CD8-positive, alpha-beta T cell (primary cell): ENCODE measurements at regions of chr1 and their contacts with region 1.

Region 1: DNA sequence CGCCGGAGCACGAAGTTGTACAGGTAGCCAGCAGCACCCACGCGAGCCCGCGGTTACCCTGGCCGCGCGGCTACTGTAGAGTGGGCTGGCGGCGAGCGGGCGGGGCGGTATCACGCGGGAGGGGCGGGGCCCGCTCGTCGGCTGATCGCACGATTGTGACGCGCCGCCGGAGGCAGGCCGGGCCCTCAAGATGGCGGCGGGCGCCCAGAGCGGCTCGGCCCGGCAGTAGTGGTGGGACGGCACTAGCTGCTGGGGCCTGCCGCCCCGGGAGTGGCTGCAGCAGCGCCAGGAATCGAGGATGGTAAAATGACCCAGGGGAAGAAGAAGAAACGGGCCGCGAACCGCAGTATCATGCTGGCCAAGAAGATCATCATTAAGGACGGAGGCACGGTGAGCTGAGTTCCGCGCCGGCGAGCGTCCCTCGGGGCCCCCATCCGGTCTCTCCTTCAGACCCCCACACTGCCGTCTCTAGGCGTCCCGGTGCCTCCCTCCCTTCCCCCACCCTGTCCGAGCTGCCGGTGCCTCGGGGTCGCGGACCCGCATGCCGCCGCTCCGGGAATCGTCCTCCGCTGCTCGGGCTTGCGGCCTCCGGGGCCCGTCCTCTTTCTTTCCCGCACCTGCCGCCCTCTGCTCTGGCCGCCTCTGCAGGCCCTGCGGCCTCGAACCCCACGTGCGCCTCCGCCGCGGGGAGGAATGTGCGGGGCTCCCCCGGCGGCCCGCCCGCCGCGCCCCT is 68.3 kb downstream of the SLC35A3 start:
- DNase-seq: peak; percentile 77 to 95 (median 87)
- ATAC-seq: peak; percentile 78
- H3K4me3 ChIP-seq: peak overlapping the region; percentile 85 to 94
- H3K4me3 Mint-ChIP-seq: peak overlapping the region; percentile 97
- H3K27ac ChIP-seq: peak overlapping the region; percentile 94 to 99
- H3K27ac Mint-ChIP-seq: peak overlapping the region; percentile 98
- H3K4me1 ChIP-seq: peaks cover 43% of the 10 kb centered on the region
- H3K4me1 Mint-ChIP-seq: peaks cover 52% of the 10 kb centered on the region
- H3K27me3 ChIP-seq: no peaks in the 10 kb centered on the region
- H3K27me3 Mint-ChIP-seq: no peaks in the 10 kb centered on the region
- CTCF ChIP-seq: no peak

Region 2: GRCh38 chr1:99808391-99809115 is 229.5 kb before region 1 on chr1:
- CTCF ChIA-PET with region 1: no interaction called
- POLR2A ChIA-PET with region 1: interaction called, 3 read pairs
- intact Hi-C with region 1: loop called (anchors 1 kb)
- DNase-seq: peak in 4 of 9 experiments; percentile 15 to 81 (median 54)
- ATAC-seq: peak; percentile 79
- H3K4me3 ChIP-seq: no peak overlapping the region
- H3K4me3 Mint-ChIP-seq: no peak overlapping the region
- H3K27ac ChIP-seq: no peak overlapping the region
- H3K27ac Mint-ChIP-seq: no peak overlapping the region
- H3K4me1 ChIP-seq: no peaks in the 10 kb centered on the region
- H3K4me1 Mint-ChIP-seq: peaks cover 4% of the 10 kb centered on the region
- H3K27me3 ChIP-seq: peaks cover 0 to 2% of the 10 kb centered on the region in 2 experiments
- H3K27me3 Mint-ChIP-seq: peaks cover 3% of the 10 kb centered on the region
- CTCF ChIP-seq: peak; percentile 85

Region 3: DNA sequence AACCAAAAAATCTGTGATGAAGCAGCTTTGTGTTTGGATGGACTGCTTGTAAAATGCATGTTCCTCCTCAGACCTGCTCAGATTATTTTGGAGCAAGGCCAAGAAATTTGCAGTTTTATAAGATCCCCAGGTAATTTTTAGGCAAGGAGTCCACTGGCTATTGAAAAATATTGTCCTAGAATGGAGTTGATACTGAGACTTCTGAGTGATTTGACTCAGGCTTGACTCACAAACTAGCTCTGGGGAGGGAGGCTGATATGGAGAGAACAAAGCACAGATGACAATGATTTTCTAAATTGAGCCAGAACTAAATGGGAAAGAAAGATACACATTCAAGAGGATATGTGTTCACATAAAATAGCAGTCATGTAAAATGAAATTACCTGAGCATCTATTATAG is 151.3 kb before region 1 on chr1:
- CTCF ChIA-PET with region 1: no interaction called
- POLR2A ChIA-PET with region 1: no interaction called
- intact Hi-C with region 1: loop called in 1 of 2 experiments (anchors 5 kb)
- DNase-seq: no peak
- ATAC-seq: no peak
- H3K4me3 ChIP-seq: no peak overlapping the region
- H3K4me3 Mint-ChIP-seq: no peak overlapping the region
- H3K27ac ChIP-seq: no peak overlapping the region
- H3K27ac Mint-ChIP-seq: no peak overlapping the region
- H3K4me1 ChIP-seq: no peaks in the 10 kb centered on the region
- H3K4me1 Mint-ChIP-seq: no peaks in the 10 kb centered on the region
- H3K27me3 ChIP-seq: no peaks in the 10 kb centered on the region
- H3K27me3 Mint-ChIP-seq: no peaks in the 10 kb centered on the region
- CTCF ChIP-seq: no peak

Region 4: GRCh38 chr1:99986656-99987225 is 51.4 kb before region 1 on chr1:
- CTCF ChIA-PET with region 1: no interaction called
- POLR2A ChIA-PET with region 1: no interaction called
- intact Hi-C with region 1: no loop called
- DNase-seq: no peak
- ATAC-seq: no peak
- H3K4me3 ChIP-seq: no peak overlapping the region
- H3K4me3 Mint-ChIP-seq: no peak overlapping the region
- H3K27ac ChIP-seq: no peak overlapping the region
- H3K27ac Mint-ChIP-seq: no peak overlapping the region
- H3K4me1 ChIP-seq: no peaks in the 10 kb centered on the region
- H3K4me1 Mint-ChIP-seq: peaks cover 19% of the 10 kb centered on the region
- H3K27me3 ChIP-seq: no peaks in the 10 kb centered on the region
- H3K27me3 Mint-ChIP-seq: no peaks in the 10 kb centered on the region
- CTCF ChIP-seq: no peak

Region 5: GRCh38 chr1:100051893-100052292 is 13.8 kb after region 1 on chr1:
- CTCF ChIA-PET with region 1: interaction called, 3 read pairs
- POLR2A ChIA-PET with region 1: interaction called, 5 read pairs
- intact Hi-C with region 1: loop called in 1 of 2 experiments (anchors 2 kb)
- DNase-seq: no peak
- ATAC-seq: no peak
- H3K4me3 ChIP-seq: no peak overlapping the region
- H3K4me3 Mint-ChIP-seq: no peak overlapping the region
- H3K27ac ChIP-seq: no peak overlapping the region
- H3K27ac Mint-ChIP-seq: no peak overlapping the region
- H3K4me1 ChIP-seq: peaks cover 28% of the 10 kb centered on the region
- H3K4me1 Mint-ChIP-seq: peaks cover 55% of the 10 kb centered on the region
- H3K27me3 ChIP-seq: no peaks in the 10 kb centered on the region
- H3K27me3 Mint-ChIP-seq: no peaks in the 10 kb centered on the region
- CTCF ChIP-seq: no peak

Region 6: GRCh38 chr1:100249537-100250257 is 211.6 kb after region 1 on chr1 and contains the start of gene DBT:
- CTCF ChIA-PET with region 1: no interaction called
- POLR2A ChIA-PET with region 1: no interaction called
- intact Hi-C with region 1: loop called (anchors 1 to 5 kb)
- DNase-seq: peak; percentile 77 to 96 (median 92)
- ATAC-seq: peak; percentile 100
- H3K4me3 ChIP-seq: peak within 1 kb of the TSS; percentile 68 to 92
- H3K4me3 Mint-ChIP-seq: no peak within 1 kb of the TSS
- H3K27ac ChIP-seq: peak within 1 kb of the TSS; percentile 71 to 87
- H3K27ac Mint-ChIP-seq: no peak within 1 kb of the TSS
- H3K4me1 ChIP-seq: peaks cover 20% of the 10 kb centered on the region
- H3K4me1 Mint-ChIP-seq: peaks cover 18% of the 10 kb centered on the region
- H3K27me3 ChIP-seq: no peaks in the 10 kb centered on the region
- H3K27me3 Mint-ChIP-seq: no peaks in the 10 kb centered on the region
- CTCF ChIP-seq: no peak
- total RNA-seq, gene DBT: 4.6 to 4.9 TPM

Region 7: GRCh38 chr1:100358210-100358609 is 320.1 kb after region 1 on chr1:
- CTCF ChIA-PET with region 1: no interaction called
- POLR2A ChIA-PET with region 1: interaction called, 3 read pairs
- intact Hi-C with region 1: loop called in 1 of 2 experiments (anchors 2 kb)
- DNase-seq: peak in 2 of 9 experiments; percentile 47 to 61
- ATAC-seq: peak; percentile 40
- H3K4me3 ChIP-seq: no peak overlapping the region
- H3K4me3 Mint-ChIP-seq: peak overlapping the region; percentile 47
- H3K27ac ChIP-seq: no peak overlapping the region
- H3K27ac Mint-ChIP-seq: peak overlapping the region; percentile 52
- H3K4me1 ChIP-seq: peaks cover 73% of the 10 kb centered on the region
- H3K4me1 Mint-ChIP-seq: peaks cover 90% of the 10 kb centered on the region
- H3K27me3 ChIP-seq: no peaks in the 10 kb centered on the region
- H3K27me3 Mint-ChIP-seq: no peaks in the 10 kb centered on the region
- CTCF ChIP-seq: peak; percentile 52